CD8-positive, alpha-beta T cell (primary cell): ENCODE measurements at regions of chr12 and their contacts with region 1.

Region 1: DNA sequence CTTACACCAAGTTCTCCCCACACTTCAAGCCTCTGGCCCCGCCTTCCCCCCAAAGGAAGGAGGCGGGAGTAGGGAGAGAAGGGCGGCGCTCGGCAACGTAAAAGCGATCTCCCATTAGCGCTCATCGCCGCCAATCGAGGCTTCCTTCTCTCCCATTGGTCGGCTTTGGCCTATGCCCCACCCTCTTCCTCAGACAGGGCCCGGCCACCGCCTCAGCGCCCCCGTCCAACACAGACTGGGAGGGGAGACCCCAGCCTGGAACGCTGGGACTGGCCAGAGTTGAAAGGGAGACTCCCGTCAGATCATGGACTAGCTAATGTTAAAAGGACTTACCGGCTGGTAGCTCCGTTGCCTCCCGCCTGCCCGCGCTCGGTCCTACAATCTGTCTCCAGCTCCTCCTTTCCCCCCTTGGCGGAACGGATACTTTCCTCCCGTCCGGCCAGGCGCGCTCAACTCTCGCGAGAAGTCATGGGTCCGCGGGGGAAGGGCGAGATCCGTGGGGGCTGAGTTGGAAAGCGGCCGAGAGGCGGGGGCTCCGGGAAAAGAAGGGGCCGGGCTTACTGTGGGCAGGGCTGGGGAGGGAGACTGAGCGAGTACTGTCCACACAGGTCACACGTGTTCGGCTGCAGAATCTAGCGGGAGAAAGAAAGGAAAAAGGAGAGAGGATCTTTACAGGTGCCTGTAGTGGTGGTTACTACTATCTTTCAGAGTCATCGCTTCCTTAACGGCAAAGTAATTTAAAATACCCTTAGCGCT is at the start of gene ATF7:
- DNase-seq: peak; percentile 96 to 100 (median 98)
- ATAC-seq: peak; percentile 92
- H3K4me3 ChIP-seq: peak within 1 kb of the TSS; percentile 65 to 90
- H3K4me3 Mint-ChIP-seq: peak within 1 kb of the TSS; percentile 93
- H3K27ac ChIP-seq: peak within 1 kb of the TSS; percentile 84 to 85
- H3K27ac Mint-ChIP-seq: peak within 1 kb of the TSS; percentile 98
- H3K4me1 ChIP-seq: peaks cover 30% of the 10 kb centered on the region
- H3K4me1 Mint-ChIP-seq: peaks cover 46% of the 10 kb centered on the region
- H3K27me3 ChIP-seq: no peaks in the 10 kb centered on the region
- H3K27me3 Mint-ChIP-seq: no peaks in the 10 kb centered on the region
- CTCF ChIP-seq: no peak
- total RNA-seq, gene ATF7: 9.1 to 13.2 TPM

Region 2: GRCh38 chr12:53441040-53441833 is 184.9 kb before region 1 on chr12 and contains the start of gene PRR13:
- CTCF ChIA-PET with region 1: no interaction called
- POLR2A ChIA-PET with region 1: no interaction called
- intact Hi-C with region 1: loop called in 1 of 2 experiments (anchors 1 kb)
- DNase-seq: peak; percentile 95 to 99 (median 99)
- ATAC-seq: peak; percentile 95
- H3K4me3 ChIP-seq: peak within 1 kb of the TSS; percentile 86 to 98
- H3K4me3 Mint-ChIP-seq: peak within 1 kb of the TSS; percentile 97
- H3K27ac ChIP-seq: peak within 1 kb of the TSS; percentile 85 to 94
- H3K27ac Mint-ChIP-seq: peak within 1 kb of the TSS; percentile 97
- H3K4me1 ChIP-seq: peaks cover 36% of the 10 kb centered on the region
- H3K4me1 Mint-ChIP-seq: peaks cover 46% of the 10 kb centered on the region
- H3K27me3 ChIP-seq: no peaks in the 10 kb centered on the region
- H3K27me3 Mint-ChIP-seq: no peaks in the 10 kb centered on the region
- CTCF ChIP-seq: no peak
- total RNA-seq, gene PRR13: 131 to 155 TPM

Region 3: DNA sequence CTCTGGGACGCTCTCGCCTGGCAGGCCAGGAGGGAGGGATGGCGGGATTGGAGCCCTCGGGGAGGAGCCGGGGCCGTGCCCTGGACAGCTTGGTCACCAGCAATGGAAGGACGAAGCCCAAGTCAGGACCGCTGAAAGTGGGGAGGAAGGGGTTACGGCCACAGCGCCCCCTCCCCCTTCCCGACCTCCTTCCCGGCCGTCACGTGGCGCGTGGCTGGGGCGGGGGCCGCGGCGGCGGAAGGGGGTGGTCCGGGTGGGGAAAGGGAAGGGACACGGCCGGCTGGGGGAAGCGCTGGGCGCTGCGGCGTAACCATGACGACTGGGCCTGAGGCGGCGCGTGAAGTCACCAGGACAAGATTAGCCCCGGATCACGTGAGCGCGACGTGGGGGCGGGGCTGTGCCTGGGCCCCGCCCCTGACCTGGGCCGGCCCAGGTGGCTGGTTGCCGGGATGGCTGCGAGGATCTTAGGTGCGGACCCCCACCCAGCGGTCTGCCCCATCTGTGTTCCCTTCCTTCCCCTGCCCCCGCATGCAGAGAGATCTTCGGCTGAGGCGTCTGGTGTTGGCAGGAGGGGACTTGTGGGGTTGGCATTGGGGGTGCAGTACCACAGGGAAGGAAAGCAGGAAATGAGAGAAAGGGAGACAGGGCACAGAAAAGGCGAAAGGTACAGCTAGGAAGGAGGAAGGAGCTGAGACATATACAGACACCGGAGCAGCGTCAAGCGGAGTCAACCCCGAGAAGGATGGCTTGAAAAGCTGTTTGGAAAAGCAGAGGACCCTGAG is 133.1 kb before region 1 on chr12:
- CTCF ChIA-PET with region 1: no interaction called
- POLR2A ChIA-PET with region 1: no interaction called
- intact Hi-C with region 1: loop called in 1 of 2 experiments (anchors 2 kb)
- DNase-seq: peak; percentile 66 to 93 (median 85)
- ATAC-seq: peak; percentile 93
- H3K4me3 ChIP-seq: peak overlapping the region; percentile 61 to 66
- H3K4me3 Mint-ChIP-seq: peak overlapping the region; percentile 89
- H3K27ac ChIP-seq: peak overlapping the region; percentile 67 to 85
- H3K27ac Mint-ChIP-seq: peak overlapping the region; percentile 91
- H3K4me1 ChIP-seq: peaks cover 20% of the 10 kb centered on the region
- H3K4me1 Mint-ChIP-seq: peaks cover 38% of the 10 kb centered on the region
- H3K27me3 ChIP-seq: no peaks in the 10 kb centered on the region
- H3K27me3 Mint-ChIP-seq: no peaks in the 10 kb centered on the region
- CTCF ChIP-seq: no peak

Region 4: GRCh38 chr12:53575502-53576253 is 50.4 kb before region 1 on chr12:
- CTCF ChIA-PET with region 1: no interaction called
- POLR2A ChIA-PET with region 1: no interaction called
- intact Hi-C with region 1: no loop called
- DNase-seq: peak in 1 of 9 experiments; percentile 27
- ATAC-seq: no peak
- H3K4me3 ChIP-seq: no peak overlapping the region
- H3K4me3 Mint-ChIP-seq: no peak overlapping the region
- H3K27ac ChIP-seq: no peak overlapping the region
- H3K27ac Mint-ChIP-seq: no peak overlapping the region
- H3K4me1 ChIP-seq: peaks cover 11% of the 10 kb centered on the region
- H3K4me1 Mint-ChIP-seq: peaks cover 20% of the 10 kb centered on the region
- H3K27me3 ChIP-seq: no peaks in the 10 kb centered on the region
- H3K27me3 Mint-ChIP-seq: no peaks in the 10 kb centered on the region
- CTCF ChIP-seq: no peak

Region 5: DNA sequence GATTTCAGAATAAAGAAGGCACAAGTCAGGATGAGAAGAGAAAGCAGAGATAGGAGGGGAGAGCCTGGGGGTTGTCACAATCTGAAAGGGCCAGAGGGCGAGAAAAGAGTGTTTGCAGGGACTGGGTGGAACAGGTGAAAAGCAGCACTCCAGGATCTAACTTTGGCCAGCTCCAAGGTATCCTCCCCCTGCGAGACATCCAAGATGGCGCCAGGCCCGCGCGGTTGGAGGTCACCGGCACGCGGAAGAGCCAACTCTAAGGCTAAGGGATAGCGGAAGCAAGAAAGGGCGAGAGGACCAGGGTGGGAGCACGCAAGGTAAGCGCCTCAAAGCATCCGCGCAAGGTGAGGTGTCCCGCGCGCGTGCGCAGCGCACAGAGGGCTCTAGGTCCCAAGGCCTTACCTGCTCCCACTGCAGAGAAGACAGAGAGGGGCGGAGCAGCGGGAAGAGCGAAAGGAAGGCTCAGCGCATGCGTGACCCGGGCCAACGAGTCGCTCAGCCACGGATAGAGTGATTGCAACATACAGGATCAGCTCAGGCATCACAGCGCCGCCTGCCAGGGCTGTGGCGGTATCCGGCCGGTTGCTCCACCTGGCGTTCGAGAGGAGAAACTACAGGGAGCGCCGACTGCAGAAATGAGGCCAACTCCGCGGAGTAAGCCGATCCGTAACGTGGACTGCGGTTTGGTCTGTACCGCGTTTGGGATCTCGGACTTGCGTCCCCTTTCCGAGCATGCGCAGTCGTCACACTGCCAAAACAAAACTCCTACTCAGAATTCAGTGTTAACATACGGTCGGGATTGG is 49.7 kb after region 1 on chr12 and contains the start of gene ATP5MC2:
- CTCF ChIA-PET with region 1: interaction called, 12 read pairs
- POLR2A ChIA-PET with region 1: interaction called, 5 read pairs
- intact Hi-C with region 1: loop called (anchors 1 kb)
- DNase-seq: peak; percentile 96 to 99 (median 97)
- ATAC-seq: peak; percentile 90
- H3K4me3 ChIP-seq: peak within 1 kb of the TSS; percentile 67 to 92
- H3K4me3 Mint-ChIP-seq: peak within 1 kb of the TSS; percentile 92
- H3K27ac ChIP-seq: peak within 1 kb of the TSS; percentile 60 to 84
- H3K27ac Mint-ChIP-seq: peak within 1 kb of the TSS; percentile 95
- H3K4me1 ChIP-seq: peaks cover 14% of the 10 kb centered on the region
- H3K4me1 Mint-ChIP-seq: peaks cover 36% of the 10 kb centered on the region
- H3K27me3 ChIP-seq: peaks cover 0 to 16% of the 10 kb centered on the region in 2 experiments
- H3K27me3 Mint-ChIP-seq: peaks cover 16% of the 10 kb centered on the region
- CTCF ChIP-seq: peak; percentile 99
- total RNA-seq, gene ATP5MC2: 220 to 229 TPM